ENCODE measurements at regions of chr6 and their contacts with region 1.

Region 1: GRCh38 chr6:32984605-32985389 is 16.4 kb downstream of the BRD2 start:
- DNase-seq: peak; percentile 93

Region 2: DNA sequence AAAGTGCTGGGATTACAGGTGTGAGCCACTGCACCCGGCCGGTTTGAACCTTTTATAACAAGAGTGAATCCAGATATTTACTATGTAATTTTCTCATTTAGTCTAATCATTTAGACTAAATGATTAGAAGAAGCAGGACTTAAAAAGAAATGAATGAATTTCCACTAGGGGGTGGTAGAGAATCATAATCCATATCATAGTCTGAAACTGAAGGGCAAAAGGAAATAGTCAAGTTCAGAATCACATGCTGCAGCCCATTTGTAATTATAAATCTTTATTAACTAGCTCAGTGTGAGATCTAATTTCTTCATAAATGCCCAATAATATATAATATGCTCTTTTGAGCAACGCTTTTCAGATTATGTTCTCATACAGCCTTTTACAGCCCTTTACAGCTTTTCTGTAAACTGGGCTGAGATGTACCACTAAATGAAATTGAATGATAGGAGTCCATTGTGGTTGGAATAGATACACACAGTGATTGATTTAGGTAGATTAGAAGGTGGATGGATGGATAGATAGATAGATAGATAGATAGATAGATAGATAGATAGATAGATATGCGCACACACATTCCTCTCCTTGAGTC is 99.0 kb before region 1 on chr6:
- intact Hi-C with region 1: loop called (anchors 2 kb)
- DNase-seq: no peak

Region 3: DNA sequence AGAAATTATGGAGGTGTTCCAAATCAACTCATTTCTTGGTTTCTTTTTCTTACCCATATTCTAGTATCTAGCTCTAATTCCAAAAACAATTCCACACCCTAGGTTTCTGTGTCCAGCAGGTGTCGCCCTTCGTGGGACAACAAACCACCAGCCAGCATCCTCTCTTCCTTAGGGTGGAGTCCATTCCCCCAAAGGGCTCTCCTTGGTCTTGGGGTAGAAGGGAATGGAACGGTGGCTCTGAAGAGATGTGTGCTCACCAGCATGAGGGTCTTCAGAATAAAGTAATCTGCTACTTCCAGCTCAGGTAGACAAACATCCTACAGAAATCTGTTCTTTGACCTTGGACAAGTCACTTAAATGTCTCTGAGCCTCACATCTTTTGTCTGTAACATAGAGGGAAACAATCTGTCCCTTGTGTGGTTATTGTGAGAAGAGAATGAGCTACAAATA is 51.1 kb before region 1 on chr6:
- intact Hi-C with region 1: loop called (anchors 1 kb)
- DNase-seq: peak; percentile 88

Region 4: DNA sequence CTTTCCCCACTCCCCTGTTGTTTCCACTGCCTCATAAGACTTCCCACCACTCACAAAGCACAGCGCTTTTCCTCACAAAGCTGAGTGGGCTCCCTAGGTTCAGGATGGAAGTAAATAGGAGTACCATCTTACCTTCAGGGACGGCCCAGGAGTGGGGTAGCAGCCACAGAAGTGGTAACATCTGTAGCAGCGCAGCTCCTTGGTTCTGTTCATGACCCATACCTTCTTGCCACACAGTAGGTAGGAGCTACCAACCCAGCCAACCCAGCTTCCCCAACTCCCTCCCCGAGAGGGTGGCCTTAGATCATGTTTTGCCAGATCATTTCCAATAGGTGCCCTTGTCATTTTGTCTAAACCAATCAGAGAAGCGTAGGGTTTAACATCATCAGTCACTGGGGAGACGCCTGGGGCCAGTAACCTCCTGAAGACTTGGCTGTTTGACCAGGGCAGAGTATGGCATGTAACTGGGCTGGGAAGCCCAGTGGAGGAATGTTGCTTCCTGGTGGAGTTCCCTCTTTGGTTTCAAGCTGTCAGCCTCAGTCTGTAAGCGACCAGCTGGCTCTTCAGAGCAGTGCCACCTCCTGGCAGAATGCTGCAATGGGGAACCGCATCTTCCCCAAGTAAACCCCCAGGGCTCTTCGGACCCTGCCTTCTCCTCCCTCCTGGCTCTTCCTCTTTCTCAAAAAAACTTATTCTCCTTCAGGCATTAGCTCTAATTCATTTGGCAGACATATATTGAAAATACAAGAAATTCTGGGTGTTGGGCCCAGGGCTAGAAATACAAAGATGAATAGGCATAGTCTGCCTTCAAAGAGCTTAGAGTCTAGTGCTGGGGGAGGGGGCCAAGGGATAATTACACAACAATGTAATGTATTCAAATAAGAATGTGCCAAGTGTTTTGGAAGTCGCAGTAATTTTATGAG is 31.7 kb before region 1 on chr6 and contains the start of gene HLA-DMA:
- intact Hi-C with region 1: loop called (anchors 5 kb)
- DNase-seq: peak; percentile 91
- total RNA-seq, gene HLA-DMA: 13.7 TPM

Measured in cardiac septum (tissue), 1 donor.